ENCODE measurements at regions of chr6 and their contacts with region 1.

Region 1: GRCh38 chr6:42547407-42548329 is 16.2 kb upstream of the UBR2 start:
- DNase-seq: peak; percentile 64
- ATAC-seq: peak; percentile 96
- H3K4me3 ChIP-seq: peak overlapping the region; percentile 55 to 58
- H3K27ac ChIP-seq: peak overlapping the region; percentile 18
- H3K4me1 ChIP-seq: peaks cover 9 to 16% of the 10 kb centered on the region in 2 experiments; a peak in 3 of 4 replicates
- H3K27me3 ChIP-seq: no peaks in the 10 kb centered on the region
- CTCF ChIP-seq: peak; percentile 93 to 99 (median 99)
- POLR2A ChIP-seq: no peak
- RAD21 ChIP-seq: peak; percentile 97

Region 2: GRCh38 chr6:42217519-42218367 is 329.9 kb before region 1 on chr6 and contains the start of gene MRPS10:
- CTCF ChIA-PET with region 1: interaction called, 10 read pairs
- POLR2A ChIA-PET with region 1: interaction called, 3 read pairs
- RAD21 ChIA-PET with region 1: no interaction called
- intact Hi-C with region 1: loop called (anchors 10 kb)
- DNase-seq: peak; percentile 95
- ATAC-seq: peak; percentile 95
- H3K4me3 ChIP-seq: peak within 1 kb of the TSS; percentile 72 to 97
- H3K27ac ChIP-seq: peak within 1 kb of the TSS; percentile 68
- H3K4me1 ChIP-seq: peaks cover 8 to 59% of the 10 kb centered on the region in 2 experiments; a peak in 3 of 4 replicates
- H3K27me3 ChIP-seq: no peaks in the 10 kb centered on the region
- CTCF ChIP-seq: no peak
- POLR2A ChIP-seq: peak; percentile 71
- RAD21 ChIP-seq: peak; percentile 19; the same call in 1 of the 2 replicates
- total RNA-seq, gene MRPS10: 62.1 TPM

Region 3: DNA sequence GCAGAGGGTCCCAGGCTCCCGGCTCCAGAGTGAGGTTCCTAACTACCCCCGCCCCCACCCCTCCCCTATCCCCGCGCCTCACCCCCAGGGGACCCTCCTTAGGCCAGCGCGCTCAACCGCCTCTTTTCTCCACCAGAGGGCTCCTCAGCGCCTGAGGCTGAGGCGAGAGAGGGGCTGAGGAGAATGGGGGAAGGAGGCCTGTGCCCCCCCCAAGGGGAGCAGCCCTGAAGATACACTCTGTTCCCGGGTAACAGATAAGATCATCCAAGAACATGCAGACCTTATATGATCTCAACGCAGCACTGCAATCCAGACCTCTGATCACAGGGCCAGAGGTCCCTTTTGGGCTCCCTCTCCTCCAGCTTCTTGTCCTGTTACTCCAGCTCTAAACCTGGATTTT is 286.7 kb before region 1 on chr6:
- CTCF ChIA-PET with region 1: interaction called, 59 read pairs
- POLR2A ChIA-PET with region 1: interaction called, 9 read pairs
- RAD21 ChIA-PET with region 1: interaction called, 8 to 18 read pairs
- intact Hi-C with region 1: loop called (anchors 1 kb)
- DNase-seq: no peak
- ATAC-seq: peak; percentile 84
- H3K4me3 ChIP-seq: peak overlapping the region; percentile 60 to 62
- H3K27ac ChIP-seq: peak overlapping the region; percentile 56
- H3K4me1 ChIP-seq: peaks cover 8 to 23% of the 10 kb centered on the region in 2 experiments; a peak in 3 of 4 replicates
- H3K27me3 ChIP-seq: no peaks in the 10 kb centered on the region
- CTCF ChIP-seq: peak; percentile 50 to 62 (median 58); a peak in 4 of 6 replicates
- POLR2A ChIP-seq: no peak
- RAD21 ChIP-seq: peak; percentile 76

Region 4: DNA sequence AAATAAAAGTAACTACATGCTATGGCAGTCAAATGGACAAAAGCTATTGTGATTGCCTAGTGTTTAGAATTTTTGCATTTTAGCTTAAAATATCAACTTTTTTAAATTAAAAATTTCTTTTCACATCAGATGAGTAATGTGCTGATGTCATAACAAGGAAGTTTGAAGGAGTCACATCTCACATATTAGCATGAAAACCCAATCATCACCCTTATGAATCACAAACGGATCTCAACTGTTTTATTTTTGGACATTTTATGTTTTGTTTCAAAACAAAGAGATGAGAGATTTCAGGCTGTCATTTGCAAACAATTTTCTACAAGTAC is 42.3 kb before region 1 on chr6:
- CTCF ChIA-PET with region 1: interaction called, 11 read pairs
- POLR2A ChIA-PET with region 1: no interaction called
- RAD21 ChIA-PET with region 1: no interaction called
- intact Hi-C with region 1: no loop called
- DNase-seq: no peak
- ATAC-seq: peak; percentile 47
- H3K4me3 ChIP-seq: no peak overlapping the region
- H3K27ac ChIP-seq: peak overlapping the region; percentile 56; the same call in 1 of the 2 replicates
- H3K4me1 ChIP-seq: peaks cover 6 to 26% of the 10 kb centered on the region in 2 experiments; a peak in 3 of 4 replicates
- H3K27me3 ChIP-seq: no peaks in the 10 kb centered on the region
- CTCF ChIP-seq: no peak
- POLR2A ChIP-seq: no peak
- RAD21 ChIP-seq: no peak

Region 5: DNA sequence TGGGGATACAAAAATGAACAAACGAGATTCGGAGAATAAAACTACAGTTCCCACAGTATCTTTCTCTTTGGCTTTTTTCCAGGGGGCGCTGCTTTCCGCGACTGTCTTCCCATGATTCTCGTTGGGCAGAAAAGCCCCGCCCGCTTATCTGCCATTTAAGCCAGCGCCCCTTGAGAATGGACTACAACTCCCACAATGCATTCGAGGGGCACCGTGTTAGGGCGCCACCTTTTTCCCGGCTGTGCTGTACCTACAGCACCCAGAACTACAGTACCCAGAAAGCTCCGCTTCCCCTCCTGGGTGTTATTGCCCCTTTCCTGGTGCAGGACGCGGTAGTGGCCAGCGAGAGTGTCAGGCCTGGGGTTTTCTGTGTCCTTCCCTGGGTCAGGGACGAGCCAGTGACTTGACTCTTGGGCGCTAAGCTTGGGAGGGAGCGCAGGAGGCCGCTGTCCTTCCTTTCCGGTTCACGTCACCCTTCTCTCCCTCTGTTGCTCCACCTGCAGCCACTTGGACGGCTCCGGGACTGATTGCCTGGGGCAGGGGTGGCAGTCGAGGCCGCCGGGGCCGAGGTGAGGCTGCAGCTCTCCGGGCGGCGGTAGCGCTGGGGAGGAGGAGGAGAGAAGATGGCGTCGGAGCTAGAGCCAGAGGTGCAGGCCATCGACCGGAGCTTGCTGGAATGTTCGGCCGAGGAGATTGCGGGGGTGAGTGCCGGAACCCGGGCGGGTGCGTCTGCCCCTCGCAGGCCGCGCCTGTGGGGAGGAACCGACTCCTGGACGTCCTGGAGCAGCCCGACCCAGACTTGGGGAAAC is 16.2 kb after region 1 on chr6 and contains the start of gene UBR2:
- CTCF ChIA-PET with region 1: interaction called, 35 read pairs
- POLR2A ChIA-PET with region 1: interaction called, 9 read pairs
- RAD21 ChIA-PET with region 1: interaction called in 1 of 2 experiments, 4 read pairs
- intact Hi-C with region 1: no loop called
- DNase-seq: peak; percentile 98
- ATAC-seq: peak; percentile 96
- H3K4me3 ChIP-seq: peak within 1 kb of the TSS; percentile 87 to 96
- H3K27ac ChIP-seq: peak within 1 kb of the TSS; percentile 76
- H3K4me1 ChIP-seq: peaks cover 2 to 18% of the 10 kb centered on the region in 2 experiments; a peak in 2 of 4 replicates
- H3K27me3 ChIP-seq: no peaks in the 10 kb centered on the region
- CTCF ChIP-seq: no peak
- POLR2A ChIP-seq: peak; percentile 80
- RAD21 ChIP-seq: no peak
- total RNA-seq, gene UBR2: 20.5 TPM